ENCODE measurements at regions of chr11 and their contacts with region 1.

Region 1: DNA sequence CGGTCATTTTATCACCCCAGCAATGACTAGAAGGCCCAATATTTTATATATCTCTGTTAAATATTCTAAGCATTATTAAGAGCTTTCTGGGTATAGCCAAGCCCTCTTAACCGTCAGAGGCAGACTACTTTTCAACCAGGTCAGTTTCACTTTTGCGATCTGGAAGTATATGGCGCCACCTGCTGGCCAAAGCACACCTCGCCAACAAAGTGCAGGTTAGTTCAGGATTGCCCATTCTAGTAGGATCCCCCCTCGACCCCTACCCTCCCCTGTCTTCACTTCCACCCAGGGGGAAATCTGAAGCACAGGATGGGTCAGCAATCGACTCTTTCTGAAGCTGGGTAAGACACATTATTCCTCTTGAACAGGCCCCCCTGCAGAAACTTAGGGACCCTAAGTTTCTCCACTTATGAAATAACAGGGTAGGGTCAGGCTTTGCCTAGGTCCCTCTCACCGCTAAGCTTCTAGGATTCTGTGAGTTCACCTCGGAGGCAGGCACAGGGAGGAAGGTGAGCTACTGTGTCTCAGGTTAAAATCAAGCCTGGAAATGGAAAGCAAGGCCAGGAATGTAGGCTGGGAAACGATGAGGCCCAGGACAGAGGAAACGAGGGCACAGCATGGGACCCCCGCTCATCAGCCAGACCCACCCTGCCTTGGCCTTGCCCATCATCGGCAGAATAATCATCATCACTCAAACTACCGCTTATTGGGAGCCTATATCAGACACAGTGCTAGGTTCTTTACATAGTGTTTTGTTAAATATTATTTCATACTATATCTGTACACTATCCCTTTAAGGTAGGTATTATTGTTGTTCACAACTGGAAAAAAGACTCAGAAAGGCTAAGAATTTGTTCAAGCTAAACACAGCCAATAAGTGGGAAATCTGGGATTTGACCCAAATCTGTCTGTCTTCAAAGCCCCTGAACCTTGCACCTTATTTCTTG is 35.6 kb downstream of the KCNJ1 start:
- DNase-seq: peak; percentile 42
- H3K4me3 ChIP-seq: no peak overlapping the region
- CTCF ChIP-seq: peak; percentile 82

Region 2: GRCh38 chr11:128172046-128172878 is 659.2 kb before region 1 on chr11:
- CTCF ChIA-PET with region 1: interaction called, 187 read pairs
- POLR2A ChIA-PET with region 1: no interaction called
- DNase-seq: peak; percentile 41
- H3K4me3 ChIP-seq: no peak overlapping the region
- CTCF ChIP-seq: peak; percentile 70

Region 3: DNA sequence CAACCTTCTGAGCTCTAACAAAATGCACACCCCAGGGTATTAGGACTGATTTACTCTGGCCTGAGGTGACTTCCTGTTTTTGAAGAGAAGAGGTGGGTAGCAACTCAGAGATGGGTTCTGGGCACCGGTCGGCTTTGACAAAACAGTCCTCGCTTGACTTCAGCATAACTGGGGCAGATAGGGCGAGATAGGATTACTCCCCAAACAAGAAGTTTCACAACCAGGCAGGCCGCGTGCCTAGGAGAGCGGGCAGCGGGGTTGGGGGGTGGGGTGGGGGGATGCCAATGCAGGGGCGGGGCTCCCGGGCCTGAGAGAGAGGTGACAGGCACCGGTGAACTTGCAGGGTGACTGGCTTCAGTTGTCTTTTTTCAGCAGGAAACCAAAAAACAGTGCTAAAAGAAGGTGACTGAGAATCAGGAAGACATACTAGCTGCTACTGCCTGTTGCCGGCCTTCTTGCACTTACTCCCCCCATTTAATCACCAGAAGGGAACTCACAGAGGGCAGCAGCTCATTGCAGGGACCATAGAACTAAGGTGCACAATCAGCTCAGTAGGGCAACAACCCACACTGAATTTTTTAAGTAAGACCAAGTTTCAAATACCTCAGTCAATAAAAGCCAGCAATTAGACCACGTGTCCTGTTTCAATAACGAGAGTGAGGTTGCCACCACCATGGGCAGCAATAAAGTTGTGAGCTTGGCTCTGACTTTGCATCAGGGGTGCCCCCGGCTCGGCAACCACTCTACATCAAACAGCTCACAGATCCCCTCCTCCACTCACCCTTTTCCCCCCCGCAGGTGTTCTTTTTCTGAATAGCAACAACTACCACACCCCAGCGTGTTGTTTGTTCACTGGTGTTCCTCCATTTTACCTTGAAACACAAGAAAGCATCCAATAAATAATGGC is 206.9 kb before region 1 on chr11:
- CTCF ChIA-PET with region 1: interaction called, 181 read pairs
- POLR2A ChIA-PET with region 1: no interaction called
- DNase-seq: no peak
- H3K4me3 ChIP-seq: no peak overlapping the region
- CTCF ChIP-seq: no peak

Region 4: GRCh38 chr11:128662960-128663359 is 168.5 kb before region 1 on chr11:
- CTCF ChIA-PET with region 1: interaction called, 11 read pairs
- POLR2A ChIA-PET with region 1: no interaction called
- DNase-seq: no peak
- H3K4me3 ChIP-seq: no peak overlapping the region
- CTCF ChIP-seq: no peak

Region 5: DNA sequence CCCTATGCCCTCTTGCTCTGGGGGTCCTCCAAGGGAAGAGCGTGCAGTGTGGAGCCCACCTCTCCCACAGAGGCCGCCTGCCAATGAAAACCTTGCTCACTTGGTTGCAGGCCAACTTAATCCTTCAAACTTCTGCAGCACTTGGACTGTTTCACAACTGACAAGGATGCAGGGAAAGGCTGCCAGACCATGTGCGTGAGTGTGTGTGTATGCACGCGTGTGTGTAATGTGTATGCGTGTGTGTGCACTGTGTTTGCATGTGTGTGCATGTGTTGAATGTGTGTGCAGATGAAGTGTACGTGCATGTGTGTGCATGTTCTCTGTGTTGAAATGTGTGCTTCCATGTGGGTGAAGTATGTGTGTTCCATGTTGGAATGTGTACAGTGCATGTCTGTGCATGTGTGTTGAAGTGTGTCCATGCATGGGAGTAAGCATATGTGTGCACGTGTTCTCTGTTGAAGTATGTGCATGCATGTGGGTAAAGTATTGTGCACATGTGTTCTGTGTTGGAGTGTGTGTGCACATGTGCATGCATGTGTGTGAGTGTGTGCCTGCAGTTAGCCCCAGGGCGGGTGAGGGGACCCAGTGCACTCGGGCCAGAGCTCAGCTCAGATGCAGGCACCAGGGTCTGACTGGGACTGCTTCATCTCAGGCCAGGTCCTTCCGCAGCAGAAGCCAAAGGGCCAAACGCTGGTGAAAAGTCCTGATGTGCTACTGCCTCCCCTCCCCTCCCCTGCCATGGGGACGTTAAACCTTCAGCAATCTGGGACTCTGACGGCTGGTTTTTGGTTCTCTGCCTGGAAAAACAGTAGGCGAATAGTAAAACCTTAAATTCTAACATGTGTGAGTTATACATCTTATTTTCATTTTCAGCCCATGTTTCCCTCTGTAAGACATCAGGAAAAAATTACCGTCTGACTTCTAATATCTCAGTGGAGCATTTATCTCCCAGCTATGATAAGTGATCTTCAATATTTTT is 65.6 kb before region 1 on chr11:
- CTCF ChIA-PET with region 1: interaction called, 14 read pairs
- POLR2A ChIA-PET with region 1: no interaction called
- DNase-seq: no peak
- H3K4me3 ChIP-seq: no peak overlapping the region
- CTCF ChIP-seq: no peak

Region 6: DNA sequence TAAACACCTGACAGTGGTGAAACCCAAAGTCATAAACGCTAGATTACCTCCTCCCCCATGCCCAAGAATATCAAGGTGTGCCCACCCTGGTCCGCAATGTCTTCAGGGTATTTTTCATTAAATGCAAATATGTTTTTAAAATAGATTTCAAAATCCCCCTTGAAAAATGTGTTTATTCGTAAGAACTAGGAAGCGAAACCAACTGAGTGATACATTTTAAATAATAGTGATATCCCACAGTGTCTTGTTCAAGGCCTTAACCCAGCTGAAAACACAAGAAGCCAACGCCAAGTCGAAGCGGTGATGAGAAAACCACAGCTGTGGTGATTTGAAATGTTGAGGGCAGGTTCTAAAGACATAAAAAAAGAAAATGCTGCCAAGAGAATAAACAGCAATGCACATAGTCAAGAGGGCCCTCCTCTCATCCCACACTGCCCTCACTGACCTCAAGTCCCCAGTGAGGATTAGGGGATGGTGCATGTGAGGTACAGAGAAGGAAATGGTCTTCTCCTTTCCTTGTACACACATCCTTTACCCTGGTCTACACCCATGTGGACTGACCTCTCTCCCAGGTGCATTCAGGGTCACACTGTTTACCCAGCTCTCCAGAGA is 10.1 kb after region 1 on chr11:
- CTCF ChIA-PET with region 1: interaction called, 35 read pairs
- POLR2A ChIA-PET with region 1: no interaction called
- DNase-seq: no peak
- H3K4me3 ChIP-seq: no peak overlapping the region
- CTCF ChIP-seq: no peak